ENCODE measurements at regions of chr10 and their contacts with region 1.

Region 1: GRCh38 chr10:19958787-19959186 is 142.6 kb downstream of the PLXDC2 start:
- DNase-seq: no peak
- H3K4me3 ChIP-seq: peak overlapping the region in 1 of 59 donors; percentile 1
- H3K27ac ChIP-seq: peak overlapping the region in 56 of 59 donors; percentile 26 to 98 (median 92)
- H3K27me3 ChIP-seq: no peaks in the 10 kb centered on the region
- CTCF ChIP-seq: no peak

Region 2: GRCh38 chr10:19825700-19826099 is 133.1 kb before region 1 on chr10:
- intact Hi-C with region 1: no loop called
- DNase-seq: no peak
- H3K4me3 ChIP-seq: peak overlapping the region in 8 of 59 donors; percentile 0 to 34 (median 8)
- H3K27ac ChIP-seq: peak overlapping the region in 43 of 59 donors; percentile 0 to 77 (median 53)
- H3K27me3 ChIP-seq: no peaks in the 10 kb centered on the region
- CTCF ChIP-seq: no peak

Region 3: GRCh38 chr10:19909025-19909696 is 49.6 kb before region 1 on chr10:
- intact Hi-C with region 1: no loop called
- DNase-seq: no peak
- H3K4me3 ChIP-seq: no peak overlapping the region
- H3K27ac ChIP-seq: peak overlapping the region in 1 of 59 donors; percentile 33
- H3K27me3 ChIP-seq: no peaks in the 10 kb centered on the region
- CTCF ChIP-seq: no peak

Region 4: DNA sequence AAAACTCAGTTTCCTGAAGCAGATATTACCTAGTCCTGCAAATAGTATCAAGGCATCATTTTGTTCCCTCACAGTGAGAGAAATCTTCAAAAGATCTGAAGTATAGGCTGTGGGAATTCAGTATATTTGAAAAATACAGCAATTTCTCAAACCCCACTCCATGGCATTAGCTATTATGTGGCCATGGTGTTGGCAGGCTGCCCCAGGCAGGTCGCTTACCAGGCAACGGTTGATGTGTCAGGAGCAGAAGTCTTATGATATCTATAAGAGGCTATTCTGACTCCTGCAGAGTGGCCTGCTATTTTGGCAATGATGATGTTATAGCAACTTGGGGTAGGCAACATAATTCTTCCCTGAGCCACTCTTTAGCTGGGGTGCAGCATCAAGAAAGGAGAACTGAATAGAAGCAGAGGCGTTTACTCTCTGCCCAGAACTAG is 45.3 kb after region 1 on chr10:
- intact Hi-C with region 1: loop called in 1 of 2 experiments (anchors 5 kb)
- DNase-seq: peak in 2 of 10 donors; percentile 43 to 49
- H3K4me3 ChIP-seq: peak overlapping the region in 7 of 59 donors; percentile 7 to 40 (median 11)
- H3K27ac ChIP-seq: peak overlapping the region in 58 of 59 donors; percentile 15 to 97 (median 90)
- H3K27me3 ChIP-seq: no peaks in the 10 kb centered on the region
- CTCF ChIP-seq: no peak

Region 5: GRCh38 chr10:20288060-20288459 is 329.3 kb after region 1 on chr10:
- intact Hi-C with region 1: loop called in 1 of 2 experiments (anchors 10 kb)
- DNase-seq: peak in 3 of 10 donors; percentile 21 to 54 (median 49)
- H3K4me3 ChIP-seq: peak overlapping the region in 14 of 59 donors; percentile 2 to 40 (median 12)
- H3K27ac ChIP-seq: peak overlapping the region in 37 of 59 donors; percentile 10 to 82 (median 64)
- H3K27me3 ChIP-seq: no peaks in the 10 kb centered on the region
- CTCF ChIP-seq: peak in 1 of 56 donors; percentile 11

Measured in dorsolateral prefrontal cortex (tissue), 120 donors.